ENCODE measurements at regions of chr11 and their contacts with region 1.

Region 1: DNA sequence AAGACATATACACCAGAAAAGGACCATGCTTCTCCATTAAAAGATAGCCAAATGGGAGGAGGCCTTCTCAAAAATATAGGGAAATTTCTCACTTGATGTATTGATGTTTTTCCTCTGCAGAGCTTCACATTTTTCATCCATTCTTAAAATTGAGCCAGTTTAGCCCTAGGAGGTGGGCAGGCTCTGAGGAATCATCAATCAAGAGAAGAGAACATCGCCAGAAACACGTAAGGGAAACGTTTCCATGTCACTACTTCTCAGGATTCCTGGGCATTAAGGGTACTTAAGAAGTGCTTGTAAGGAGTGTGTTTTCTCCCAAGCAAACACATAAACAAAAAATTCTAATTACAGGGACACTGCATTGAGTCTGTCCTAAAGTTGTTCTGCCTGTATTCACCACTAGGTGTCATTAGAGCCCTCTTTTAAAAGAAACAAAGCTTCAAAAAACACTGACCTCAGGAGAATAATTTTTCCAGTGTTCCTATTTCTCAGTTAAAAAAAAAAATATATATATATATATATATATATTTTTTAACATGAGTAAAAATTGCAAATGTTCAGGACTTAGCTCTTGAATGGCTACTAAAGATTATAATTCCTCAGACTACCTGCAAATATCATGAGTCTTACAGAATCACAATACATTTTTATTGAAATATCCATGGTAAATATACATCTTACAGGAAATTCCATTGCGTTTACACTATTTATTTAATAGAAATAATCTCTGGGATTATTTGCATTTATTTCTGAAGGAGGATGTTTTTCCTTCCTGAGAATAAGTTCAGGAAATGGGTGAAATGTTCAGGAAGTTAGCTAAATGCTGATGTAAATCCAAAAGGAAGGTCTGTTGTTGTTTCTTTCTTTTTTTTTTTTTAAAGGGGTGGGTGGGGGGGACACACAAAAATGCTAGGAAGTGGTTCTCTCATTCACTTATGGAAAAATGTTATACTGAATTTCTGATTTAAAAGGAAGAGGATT is 16.0 kb downstream of the FZD4 start:
- DNase-seq: no peak

Region 2: GRCh38 chr11:87007963-87008362 is 68.8 kb after region 1 on chr11:
- intact Hi-C with region 1: no loop called
- DNase-seq: no peak

Region 3: DNA sequence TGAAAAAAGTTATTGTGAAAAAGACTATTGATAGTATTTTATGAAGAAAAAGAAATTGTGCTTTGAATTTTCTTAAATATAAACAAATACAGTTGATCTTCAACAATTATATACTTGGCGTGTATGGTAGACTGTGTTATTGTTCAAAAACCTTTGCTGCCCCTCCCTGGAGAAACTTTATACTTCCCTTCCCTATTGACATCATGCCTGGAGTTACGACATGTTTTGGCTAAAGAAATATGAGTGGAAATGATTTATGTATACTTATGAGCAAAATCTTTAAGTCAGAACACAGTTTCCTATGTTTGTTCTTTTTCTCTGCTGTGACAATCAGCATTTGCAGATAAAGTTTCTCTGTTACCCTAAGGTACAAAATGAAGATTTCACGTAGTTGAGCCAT is 342.3 kb after region 1 on chr11:
- intact Hi-C with region 1: loop called (anchors 5 to 10 kb)
- DNase-seq: no peak

Region 4: GRCh38 chr11:87639753-87640364 is 700.7 kb after region 1 on chr11:
- intact Hi-C with region 1: no loop called
- DNase-seq: no peak

Region 5: GRCh38 chr11:88695689-88696414 is 1756.7 kb after region 1 on chr11:
- intact Hi-C with region 1: no loop called
- DNase-seq: no peak

Measured in posterior vena cava (tissue), 2 donors.